ENCODE measurements at regions of chr15 and their contacts with region 1.

Region 1: GRCh38 chr15:34337557-34338306 is at the start of gene SLC12A6:
- DNase-seq: peak; percentile 95
- ATAC-seq: peak; percentile 82
- H3K4me3 ChIP-seq: peak within 1 kb of the TSS; percentile 90
- H3K27ac ChIP-seq: peak within 1 kb of the TSS; percentile 93
- H3K4me1 ChIP-seq: peaks cover 68% of the 10 kb centered on the region
- H3K27me3 ChIP-seq: no peaks in the 10 kb centered on the region
- CTCF ChIP-seq: no peak
- total RNA-seq, gene SLC12A6: 22.9 TPM in 2 replicates

Region 2: GRCh38 chr15:34233614-34234013 is 104.1 kb before region 1 on chr15:
- CTCF ChIA-PET with region 1: no interaction called
- POLR2A ChIA-PET with region 1: no interaction called
- intact Hi-C with region 1: no loop called
- DNase-seq: no peak
- ATAC-seq: no peak
- H3K4me3 ChIP-seq: no peak overlapping the region
- H3K27ac ChIP-seq: peak overlapping the region; percentile 72; the same call in 1 of the 2 replicates
- H3K4me1 ChIP-seq: peaks cover 19% of the 10 kb centered on the region
- H3K27me3 ChIP-seq: no peaks in the 10 kb centered on the region
- CTCF ChIP-seq: no peak

Region 3: DNA sequence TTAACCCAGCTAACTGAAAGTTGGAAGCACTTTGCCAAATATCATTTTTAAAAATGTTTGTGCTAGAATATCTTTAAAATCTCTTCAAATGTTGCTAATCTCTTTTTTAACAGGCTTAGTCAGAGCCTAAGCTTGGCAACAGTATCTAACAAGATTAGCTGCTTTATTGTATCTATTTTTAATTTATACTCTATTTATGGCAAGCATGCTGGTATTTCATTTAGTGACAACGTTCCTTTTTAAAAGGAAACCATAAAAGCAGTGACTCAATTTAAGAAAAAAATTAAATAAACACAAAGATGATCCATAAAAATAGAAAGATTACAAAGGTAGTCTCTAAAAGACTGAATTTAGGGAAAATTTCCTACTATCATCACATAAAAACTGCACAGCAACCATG is 40.7 kb before region 1 on chr15:
- CTCF ChIA-PET with region 1: no interaction called
- POLR2A ChIA-PET with region 1: no interaction called
- intact Hi-C with region 1: loop called (anchors 1 kb)
- DNase-seq: peak; percentile 62
- ATAC-seq: peak; percentile 88
- H3K4me3 ChIP-seq: no peak overlapping the region
- H3K27ac ChIP-seq: peak overlapping the region; percentile 81
- H3K4me1 ChIP-seq: peaks cover 30% of the 10 kb centered on the region
- H3K27me3 ChIP-seq: no peaks in the 10 kb centered on the region
- CTCF ChIP-seq: no peak

Region 4: GRCh38 chr15:34520566-34520965 is 182.8 kb after region 1 on chr15:
- CTCF ChIA-PET with region 1: no interaction called
- POLR2A ChIA-PET with region 1: no interaction called
- intact Hi-C with region 1: no loop called
- DNase-seq: no peak
- ATAC-seq: no peak
- H3K4me3 ChIP-seq: no peak overlapping the region
- H3K27ac ChIP-seq: no peak overlapping the region
- H3K4me1 ChIP-seq: no peaks in the 10 kb centered on the region
- H3K27me3 ChIP-seq: no peaks in the 10 kb centered on the region
- CTCF ChIP-seq: no peak